GM12878 (cell line): ENCODE measurements at regions of chr22 and their contacts with region 1.

Region 1: GRCh38 chr22:26502688-26503561 is 9.3 kb downstream of the TFIP11 start:
- DNase-seq: no peak
- ATAC-seq: peak; percentile 90
- H3K4me3 ChIP-seq: no peak overlapping the region
- H3K27ac ChIP-seq: no peak overlapping the region
- H3K4me1 ChIP-seq: peaks cover 6% of the 10 kb centered on the region
- H3K27me3 ChIP-seq: no peaks in the 10 kb centered on the region
- CTCF ChIP-seq: peak; percentile 66 to 72 (median 68)
- EP300 ChIP-seq: no peak
- POLR2A ChIP-seq: no peak
- RAD21 ChIP-seq: peak; percentile 66

Region 2: DNA sequence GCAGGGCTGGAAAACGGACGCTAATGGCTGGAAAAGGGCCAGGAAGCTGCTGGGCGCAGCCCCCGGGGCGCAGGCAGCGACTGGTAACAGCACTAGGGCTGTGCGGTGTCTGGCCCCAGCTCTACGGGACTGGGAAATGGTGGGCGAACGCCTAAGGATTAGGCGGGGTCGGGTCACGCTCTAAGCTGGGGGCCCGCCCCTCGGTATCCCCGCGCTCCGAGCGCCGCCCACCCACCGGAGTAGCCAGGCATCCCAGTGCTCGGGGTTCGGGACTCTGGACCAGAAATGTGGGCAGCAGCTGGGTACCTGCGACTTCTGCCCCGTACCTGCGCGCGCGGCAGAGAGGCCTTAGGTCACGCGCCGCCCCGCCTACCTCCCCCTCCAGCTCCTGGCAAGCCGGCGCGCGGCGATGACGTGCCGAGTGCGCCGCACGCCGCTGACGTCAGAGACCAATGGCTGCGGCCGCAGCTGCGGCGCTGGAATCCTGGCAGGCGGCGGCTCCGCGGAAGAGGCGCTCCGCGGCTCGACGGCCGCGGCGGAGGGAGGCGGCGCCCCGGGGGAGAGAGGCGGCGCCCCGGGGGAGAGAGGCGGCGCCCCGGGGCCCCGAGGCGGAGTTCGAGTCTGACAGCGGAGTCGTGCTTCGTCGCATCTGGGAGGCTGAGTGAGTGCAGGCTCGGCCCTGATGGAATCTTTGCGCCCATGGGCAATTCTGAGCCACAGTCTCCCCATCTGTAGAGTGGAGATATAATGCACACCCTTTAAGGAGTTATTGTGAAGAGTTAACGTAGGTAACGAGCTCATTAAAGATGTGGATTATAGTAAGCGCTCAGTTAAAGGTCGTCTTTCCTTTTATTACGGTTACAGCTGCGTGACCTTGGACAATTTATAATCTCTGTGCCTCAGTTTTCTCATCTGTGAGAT is 19.2 kb before region 1 on chr22 and contains the starts of genes HPS4 and SRRD:
- CTCF ChIA-PET with region 1: interaction called, 29 read pairs
- POLR2A ChIA-PET with region 1: interaction called, 3 read pairs
- RAD21 ChIA-PET with region 1: interaction called, 4 read pairs
- SMC1A ChIA-PET with region 1: interaction called, 15 read pairs
- in situ Hi-C with region 1: no loop called
- intact Hi-C with region 1: no loop called
- DNase-seq: peak; percentile 56
- ATAC-seq: peak; percentile 79
- H3K4me3 ChIP-seq: peak within 1 kb of the TSS; percentile 97
- H3K27ac ChIP-seq: peak within 1 kb of the TSS; percentile 88
- H3K4me1 ChIP-seq: peaks cover 23% of the 10 kb centered on the region
- H3K27me3 ChIP-seq: no peaks in the 10 kb centered on the region
- CTCF ChIP-seq: no peak
- EP300 ChIP-seq: peak; percentile 12 to 19; a peak in 1 of 4 replicates
- POLR2A ChIP-seq: peak; percentile 95
- RAD21 ChIP-seq: no peak
- polyA plus RNA-seq, gene HPS4: 11.7 to 12.3 TPM
- polyA plus RNA-seq, gene SRRD: 4.1 to 15.4 TPM

Region 3: DNA sequence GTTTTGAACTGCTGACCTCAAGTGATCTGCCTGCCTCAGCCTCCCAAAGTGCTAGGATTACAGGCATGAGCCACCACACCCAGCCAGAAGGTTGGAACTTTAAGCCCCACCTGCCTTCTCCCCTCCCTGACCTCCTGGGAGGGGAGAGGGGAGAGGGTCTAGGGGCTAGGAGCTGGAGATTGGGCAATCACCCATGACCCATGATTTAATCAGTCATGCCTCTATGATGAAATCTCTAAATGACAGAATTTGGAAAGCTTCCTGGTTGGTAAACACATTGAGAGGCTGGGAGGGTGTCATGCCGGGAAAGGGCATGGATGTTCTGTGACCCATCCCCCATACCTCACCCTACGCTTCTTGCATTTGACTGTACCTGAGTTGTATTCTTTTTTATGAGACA is 26.4 kb after region 1 on chr22:
- CTCF ChIA-PET with region 1: interaction called, 44 read pairs
- POLR2A ChIA-PET with region 1: no interaction called
- RAD21 ChIA-PET with region 1: no interaction called
- SMC1A ChIA-PET with region 1: interaction called, 15 read pairs
- in situ Hi-C with region 1: no loop called
- intact Hi-C with region 1: no loop called
- DNase-seq: no peak
- ATAC-seq: no peak
- H3K4me3 ChIP-seq: no peak overlapping the region
- H3K27ac ChIP-seq: no peak overlapping the region
- H3K4me1 ChIP-seq: peaks cover 12% of the 10 kb centered on the region
- H3K27me3 ChIP-seq: no peaks in the 10 kb centered on the region
- CTCF ChIP-seq: no peak
- EP300 ChIP-seq: no peak
- POLR2A ChIP-seq: no peak
- RAD21 ChIP-seq: no peak

Region 4: GRCh38 chr22:26534874-26535602 is 32.1 kb after region 1 on chr22:
- CTCF ChIA-PET with region 1: interaction called, 44 read pairs
- POLR2A ChIA-PET with region 1: no interaction called
- RAD21 ChIA-PET with region 1: interaction called, 5 read pairs
- SMC1A ChIA-PET with region 1: interaction called, 15 read pairs
- in situ Hi-C with region 1: no loop called
- intact Hi-C with region 1: no loop called
- DNase-seq: no peak
- ATAC-seq: peak; percentile 34
- H3K4me3 ChIP-seq: 0 out of 2 replicates have a peak overlapping the region, but pooled peaks have one; percentile 21
- H3K27ac ChIP-seq: peak overlapping the region; percentile 63
- H3K4me1 ChIP-seq: peaks cover 25% of the 10 kb centered on the region
- H3K27me3 ChIP-seq: no peaks in the 10 kb centered on the region
- CTCF ChIP-seq: no peak
- EP300 ChIP-seq: no peak
- POLR2A ChIP-seq: no peak
- RAD21 ChIP-seq: no peak

Region 5: GRCh38 chr22:26589845-26590736 is 87.2 kb after region 1 on chr22 and contains the start of gene TPST2:
- CTCF ChIA-PET with region 1: interaction called, 12 read pairs
- POLR2A ChIA-PET with region 1: no interaction called
- RAD21 ChIA-PET with region 1: no interaction called
- SMC1A ChIA-PET with region 1: interaction called, 4 read pairs
- in situ Hi-C with region 1: no loop called
- intact Hi-C with region 1: loop called (anchors 5 kb)
- DNase-seq: no peak
- ATAC-seq: peak; percentile 81
- H3K4me3 ChIP-seq: peak within 1 kb of the TSS; percentile 89
- H3K27ac ChIP-seq: peak within 1 kb of the TSS; percentile 82
- H3K4me1 ChIP-seq: peaks cover 41% of the 10 kb centered on the region
- H3K27me3 ChIP-seq: no peaks in the 10 kb centered on the region
- CTCF ChIP-seq: no peak
- EP300 ChIP-seq: no peak
- POLR2A ChIP-seq: peak; percentile 85
- RAD21 ChIP-seq: 0 out of 2 replicates have a peak, but pooled peaks have one; percentile 2
- polyA plus RNA-seq, gene TPST2: 6.3 to 10.7 TPM

Region 6: GRCh38 chr22:26672590-26673468 is 169.9 kb after region 1 on chr22:
- CTCF ChIA-PET with region 1: interaction called, 5 read pairs
- POLR2A ChIA-PET with region 1: no interaction called
- RAD21 ChIA-PET with region 1: no interaction called
- SMC1A ChIA-PET with region 1: interaction called, 4 read pairs
- in situ Hi-C with region 1: no loop called
- intact Hi-C with region 1: loop called (anchors 5 kb)
- DNase-seq: peak; percentile 98
- ATAC-seq: peak; percentile 79
- H3K4me3 ChIP-seq: peak overlapping the region; percentile 100
- H3K27ac ChIP-seq: peak overlapping the region; percentile 99
- H3K4me1 ChIP-seq: peaks cover 39% of the 10 kb centered on the region
- H3K27me3 ChIP-seq: no peaks in the 10 kb centered on the region
- CTCF ChIP-seq: peak; percentile 61 to 66 (median 66)
- EP300 ChIP-seq: no peak
- POLR2A ChIP-seq: peak; percentile 82
- RAD21 ChIP-seq: peak; percentile 24; the same call in 1 of the 2 replicates

Region 7: DNA sequence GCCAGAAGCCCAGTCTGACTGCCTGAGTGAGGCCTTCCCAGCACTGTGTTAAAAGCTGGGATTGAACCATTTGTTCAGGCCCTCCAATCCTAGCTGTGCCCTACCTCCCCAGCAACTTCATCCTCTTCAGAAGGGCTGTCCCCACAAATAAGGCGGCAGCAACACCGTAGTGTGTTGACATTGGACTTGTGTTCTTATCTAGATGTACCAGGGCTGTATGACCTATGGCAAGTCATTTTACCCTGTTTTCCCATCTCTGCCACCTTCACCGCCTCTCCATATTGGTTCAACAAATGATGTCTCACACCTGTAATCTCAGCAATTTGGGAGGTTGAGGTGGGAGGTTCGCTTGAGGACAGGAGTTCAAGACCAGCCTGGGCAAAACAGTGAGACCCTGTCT is 181.7 kb after region 1 on chr22:
- CTCF ChIA-PET with region 1: no interaction called
- POLR2A ChIA-PET with region 1: no interaction called
- RAD21 ChIA-PET with region 1: no interaction called
- SMC1A ChIA-PET with region 1: no interaction called
- in situ Hi-C with region 1: no loop called
- intact Hi-C with region 1: no loop called
- DNase-seq: no peak
- ATAC-seq: no peak
- H3K4me3 ChIP-seq: no peak overlapping the region
- H3K27ac ChIP-seq: no peak overlapping the region
- H3K4me1 ChIP-seq: no peaks in the 10 kb centered on the region
- H3K27me3 ChIP-seq: no peaks in the 10 kb centered on the region
- CTCF ChIP-seq: no peak
- EP300 ChIP-seq: no peak
- POLR2A ChIP-seq: no peak
- RAD21 ChIP-seq: no peak